Activated CD4-positive, alpha-beta T cell treated with anti-CD3 and anti-CD28 coated beads for 36 hours (primary cell): ENCODE measurements at regions of chr5 and their contacts with region 1.

Region 1: GRCh38 chr5:148740966-148741742 is 85.3 kb upstream of the ADRB2 start:
- DNase-seq: no peak
- ATAC-seq: no peak
- H3K4me3 Mint-ChIP-seq: no peak overlapping the region
- H3K27ac Mint-ChIP-seq: no peak overlapping the region
- H3K4me1 Mint-ChIP-seq: no peaks in the 10 kb centered on the region
- H3K27me3 Mint-ChIP-seq: peaks cover 13% of the 10 kb centered on the region

Region 2: DNA sequence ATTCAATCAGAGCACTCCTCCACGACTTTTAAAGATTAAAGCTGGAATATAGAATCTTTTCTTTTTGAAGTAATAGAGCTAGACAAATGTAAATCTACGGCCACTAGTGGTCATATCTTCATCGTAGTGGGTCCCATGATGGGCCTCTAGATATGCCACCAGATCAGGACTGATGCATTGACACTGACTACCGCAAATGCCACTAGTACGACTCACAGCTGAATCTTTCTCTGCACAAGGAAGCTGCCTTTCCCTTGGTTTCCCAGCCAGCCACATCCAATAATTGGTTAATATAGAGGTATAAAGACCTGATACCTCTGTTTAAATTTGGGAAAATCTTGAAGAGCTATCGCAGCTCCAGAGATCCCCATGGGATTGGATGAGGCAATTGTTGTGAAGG is 47.5 kb after region 1 on chr5:
- CTCF ChIA-PET with region 1: no interaction called
- POLR2A ChIA-PET with region 1: no interaction called
- intact Hi-C with region 1: no loop called
- DNase-seq: no peak
- ATAC-seq: no peak
- H3K4me3 Mint-ChIP-seq: no peak overlapping the region
- H3K27ac Mint-ChIP-seq: no peak overlapping the region
- H3K4me1 Mint-ChIP-seq: peaks cover 23% of the 10 kb centered on the region
- H3K27me3 Mint-ChIP-seq: peaks cover 34% of the 10 kb centered on the region

Region 3: GRCh38 chr5:148826053-148826738 is 85.0 kb after region 1 on chr5 and contains the start of gene ADRB2:
- CTCF ChIA-PET with region 1: interaction called, 6 read pairs
- POLR2A ChIA-PET with region 1: no interaction called
- intact Hi-C with region 1: loop called in 1 of 2 experiments (anchors 2 kb)
- DNase-seq: peak; percentile 89
- ATAC-seq: peak; percentile 95
- H3K4me3 Mint-ChIP-seq: peak within 1 kb of the TSS; percentile 66
- H3K27ac Mint-ChIP-seq: peak within 1 kb of the TSS; percentile 3
- H3K4me1 Mint-ChIP-seq: peaks cover 22% of the 10 kb centered on the region
- H3K27me3 Mint-ChIP-seq: peaks cover 30% of the 10 kb centered on the region
- total RNA-seq, gene ADRB2: 0.09 TPM in 1 of 2 experiments, not detected in the other

Region 4: GRCh38 chr5:148998174-148998797 is 257.1 kb after region 1 on chr5:
- CTCF ChIA-PET with region 1: interaction called, 13 read pairs
- POLR2A ChIA-PET with region 1: no interaction called
- intact Hi-C with region 1: loop called in 1 of 2 experiments (anchors 2 kb)
- DNase-seq: peak; percentile 15
- ATAC-seq: peak; percentile 66
- H3K4me3 Mint-ChIP-seq: no peak overlapping the region
- H3K27ac Mint-ChIP-seq: no peak overlapping the region
- H3K4me1 Mint-ChIP-seq: no peaks in the 10 kb centered on the region
- H3K27me3 Mint-ChIP-seq: peaks cover 27% of the 10 kb centered on the region